Breast epithelium (tissue), 4 donors: ENCODE measurements at regions of chr3 and their contacts with region 1.

Region 1: GRCh38 chr3:131200636-131201199 is 174.0 kb downstream of the NEK11 start:
- DNase-seq: no peak
- H3K4me3 ChIP-seq: no peak overlapping the region
- H3K27ac ChIP-seq: no peak overlapping the region
- H3K4me1 ChIP-seq: no peaks in the 10 kb centered on the region
- H3K27me3 ChIP-seq: no peaks in the 10 kb centered on the region
- CTCF ChIP-seq: no peak
- POLR2A ChIP-seq: no peak

Region 2: GRCh38 chr3:131174752-131175151 is 26.0 kb before region 1 on chr3:
- intact Hi-C with region 1: no loop called
- DNase-seq: no peak
- H3K4me3 ChIP-seq: no peak overlapping the region
- H3K27ac ChIP-seq: no peak overlapping the region
- H3K4me1 ChIP-seq: no peaks in the 10 kb centered on the region
- H3K27me3 ChIP-seq: no peaks in the 10 kb centered on the region
- CTCF ChIP-seq: no peak
- POLR2A ChIP-seq: no peak

Region 3: GRCh38 chr3:131221731-131222130 is 21.0 kb after region 1 on chr3:
- intact Hi-C with region 1: no loop called
- DNase-seq: no peak
- H3K4me3 ChIP-seq: no peak overlapping the region
- H3K27ac ChIP-seq: no peak overlapping the region
- H3K4me1 ChIP-seq: no peaks in the 10 kb centered on the region
- H3K27me3 ChIP-seq: no peaks in the 10 kb centered on the region
- CTCF ChIP-seq: no peak
- POLR2A ChIP-seq: no peak

Region 4: GRCh38 chr3:132154609-132155008 is 953.9 kb after region 1 on chr3:
- intact Hi-C with region 1: loop called (anchors 5 kb)
- DNase-seq: no peak
- H3K4me3 ChIP-seq: no peak overlapping the region
- H3K27ac ChIP-seq: no peak overlapping the region
- H3K4me1 ChIP-seq: no peaks in the 10 kb centered on the region
- H3K27me3 ChIP-seq: no peaks in the 10 kb centered on the region
- CTCF ChIP-seq: no peak
- POLR2A ChIP-seq: no peak